ENCODE measurements at regions of chr4 and their contacts with region 1.

Region 1: GRCh38 chr4:154618708-154619315 is 6.4 kb upstream of the FGG start:
- DNase-seq: peak; percentile 40 to 55
- H3K4me3 ChIP-seq: no peak overlapping the region
- H3K27ac ChIP-seq: no peak overlapping the region
- H3K4me1 ChIP-seq: no peaks in the 10 kb centered on the region
- H3K27me3 ChIP-seq: no peaks in the 10 kb centered on the region
- CTCF ChIP-seq: peak; percentile 76

Region 2: GRCh38 chr4:154329268-154329868 is 289.4 kb before region 1 on chr4:
- CTCF ChIA-PET with region 1: interaction called, 4 read pairs
- POLR2A ChIA-PET with region 1: no interaction called
- intact Hi-C with region 1: loop called (anchors 1 kb)
- DNase-seq: no peak
- H3K4me3 ChIP-seq: no peak overlapping the region
- H3K27ac ChIP-seq: no peak overlapping the region
- H3K4me1 ChIP-seq: no peaks in the 10 kb centered on the region
- H3K27me3 ChIP-seq: no peaks in the 10 kb centered on the region
- CTCF ChIP-seq: peak; percentile 48; the same call in 1 of the 2 replicates

Region 3: DNA sequence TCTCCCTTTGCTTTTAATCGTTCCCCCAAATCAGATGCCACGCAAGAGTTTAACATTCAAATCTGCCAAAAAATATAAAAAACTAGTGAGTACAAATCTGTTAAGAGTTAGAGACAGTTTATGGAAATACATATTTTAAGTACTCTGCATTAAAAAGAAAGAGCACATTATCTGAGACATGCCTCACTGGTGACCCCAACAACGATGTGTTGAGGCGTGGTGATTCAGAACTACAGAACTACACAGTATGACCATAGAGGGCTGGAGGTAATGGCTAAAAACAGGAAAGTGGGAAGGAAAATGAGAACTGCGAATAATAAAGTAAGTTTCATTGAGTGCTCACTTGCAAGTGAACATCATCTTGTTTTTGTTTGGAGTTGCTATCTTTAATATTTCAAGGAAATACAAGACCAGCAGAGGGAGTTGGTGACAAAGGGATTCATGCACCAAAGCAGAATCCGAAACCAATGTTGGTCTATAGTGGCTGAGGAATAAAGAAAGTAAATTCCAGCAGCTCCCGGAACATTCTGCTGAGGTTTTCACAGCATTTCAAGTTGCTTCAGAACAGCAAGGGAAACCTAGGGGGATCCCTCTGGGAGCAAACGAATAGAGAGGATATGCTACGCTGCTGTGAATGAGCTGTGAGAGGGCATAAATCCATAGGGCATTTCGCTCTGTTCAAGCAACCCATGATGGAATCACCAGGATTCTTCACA is 219.4 kb before region 1 on chr4:
- CTCF ChIA-PET with region 1: no interaction called
- POLR2A ChIA-PET with region 1: no interaction called
- intact Hi-C with region 1: loop called (anchors 1 kb)
- DNase-seq: peak in 1 of 2 experiments; percentile 2
- H3K4me3 ChIP-seq: no peak overlapping the region
- H3K27ac ChIP-seq: no peak overlapping the region
- H3K4me1 ChIP-seq: no peaks in the 10 kb centered on the region
- H3K27me3 ChIP-seq: no peaks in the 10 kb centered on the region
- CTCF ChIP-seq: peak; percentile 38; the same call in 1 of the 2 replicates

Region 4: GRCh38 chr4:154506253-154506652 is 112.6 kb before region 1 on chr4:
- CTCF ChIA-PET with region 1: interaction called, 5 read pairs
- POLR2A ChIA-PET with region 1: no interaction called
- intact Hi-C with region 1: loop called (anchors 1 kb)
- DNase-seq: no peak
- H3K4me3 ChIP-seq: peak overlapping the region; percentile 14; the same call in 1 of the 2 replicates
- H3K27ac ChIP-seq: peak overlapping the region; percentile 89
- H3K4me1 ChIP-seq: peaks cover 19% of the 10 kb centered on the region
- H3K27me3 ChIP-seq: no peaks in the 10 kb centered on the region
- CTCF ChIP-seq: peak; percentile 30; the same call in 1 of the 2 replicates

Region 5: GRCh38 chr4:154559494-154560418 is 59.1 kb before region 1 on chr4:
- CTCF ChIA-PET with region 1: interaction called, 36 read pairs
- POLR2A ChIA-PET with region 1: no interaction called
- intact Hi-C with region 1: loop called (anchors 1 kb)
- DNase-seq: no peak
- H3K4me3 ChIP-seq: no peak overlapping the region
- H3K27ac ChIP-seq: no peak overlapping the region
- H3K4me1 ChIP-seq: peaks cover 12% of the 10 kb centered on the region; the same call in 1 of the 2 replicates
- H3K27me3 ChIP-seq: no peaks in the 10 kb centered on the region
- CTCF ChIP-seq: peak; percentile 71

Measured in PC-9 (cell line).